Heart left ventricle (tissue), 16 donors: ENCODE measurements at regions of chr19 and their contacts with region 1.

Region 1: GRCh38 chr19:55385740-55386529 is at the start of gene RPL28:
- DNase-seq: peak; percentile 98 to 99 (median 98)
- ATAC-seq: peak; percentile 90 to 95 (median 90)
- H3K4me3 ChIP-seq: peak within 1 kb of the TSS; percentile 48 to 87 (median 78)
- H3K27ac ChIP-seq: peak within 1 kb of the TSS; percentile 79 to 97 (median 94)
- H3K4me1 ChIP-seq: peaks cover 14 to 58% (median 42%) of the 10 kb centered on the region in 12 donors
- H3K27me3 ChIP-seq: no peaks in the 10 kb centered on the region
- CTCF ChIP-seq: no peak
- POLR2A ChIP-seq: peak; percentile 34 to 99
- total RNA-seq, gene RPL28: 196 to 1,019 (median 565) TPM

Region 2: GRCh38 chr19:55216461-55217198 is 169.3 kb before region 1 on chr19:
- intact Hi-C with region 1: no loop called
- DNase-seq: peak; percentile 75 to 89 (median 85)
- ATAC-seq: peak; percentile 89 to 95 (median 92)
- H3K4me3 ChIP-seq: peak overlapping the region in 11 of 12 donors; percentile 7 to 60 (median 56)
- H3K27ac ChIP-seq: peak overlapping the region in 10 of 12 donors; percentile 30 to 89 (median 68)
- H3K4me1 ChIP-seq: peaks cover 0 to 16% (median 10%) of the 10 kb centered on the region in 12 donors
- H3K27me3 ChIP-seq: no peaks in the 10 kb centered on the region
- CTCF ChIP-seq: no peak
- POLR2A ChIP-seq: no peak

Region 3: DNA sequence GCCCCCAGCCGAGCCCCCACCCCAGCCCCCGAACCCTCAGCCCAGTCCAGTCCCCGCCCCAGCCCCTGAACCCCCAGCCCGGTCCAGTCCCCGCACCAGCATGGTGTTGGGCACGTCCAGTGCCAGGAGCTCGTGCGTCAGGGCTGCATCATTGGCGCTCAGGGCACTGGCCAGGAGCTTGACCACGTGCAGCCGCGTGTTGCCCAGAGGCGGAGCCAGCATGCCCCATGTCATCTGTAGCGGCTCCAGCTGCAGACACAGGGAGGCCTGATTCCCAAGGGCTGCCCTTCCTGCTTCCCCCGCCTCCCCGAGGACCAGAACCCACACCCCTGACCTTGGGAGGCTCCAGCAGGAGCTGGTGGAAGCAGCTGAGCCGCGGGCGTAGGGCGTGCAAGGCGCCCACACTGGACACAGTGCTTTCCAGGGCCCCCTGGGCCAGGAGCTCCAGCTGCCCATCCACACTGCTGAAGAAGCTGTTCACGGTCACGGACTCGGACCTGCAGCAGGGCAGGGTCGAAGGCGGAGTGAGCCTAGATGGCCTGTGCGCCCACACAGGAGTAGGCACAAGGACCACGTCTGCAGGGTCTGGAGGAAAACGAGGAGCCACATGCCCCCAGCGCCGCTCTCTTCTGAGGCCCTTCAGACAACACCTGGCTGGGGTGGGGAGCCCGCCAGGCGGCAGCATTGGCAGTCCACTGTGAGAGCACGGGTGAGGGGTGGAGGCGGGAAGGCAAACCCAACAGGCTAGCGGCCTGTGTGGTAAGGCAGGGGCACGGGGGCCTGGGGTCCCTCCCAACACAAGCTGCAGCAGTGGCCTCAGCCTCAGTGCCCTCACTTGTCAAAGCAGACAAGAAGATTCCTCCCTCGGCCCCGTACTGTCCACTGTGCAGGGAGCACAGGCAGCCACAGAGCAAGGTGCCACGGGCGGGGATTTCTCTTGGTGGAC is 144.5 kb before region 1 on chr19:
- intact Hi-C with region 1: no loop called
- DNase-seq: peak in 1 of 5 donors; percentile 21
- ATAC-seq: peak in 1 of 4 donors; percentile 6
- H3K4me3 ChIP-seq: no peak overlapping the region
- H3K27ac ChIP-seq: no peak overlapping the region
- H3K4me1 ChIP-seq: no peaks in the 10 kb centered on the region
- H3K27me3 ChIP-seq: no peaks in the 10 kb centered on the region
- CTCF ChIP-seq: no peak
- POLR2A ChIP-seq: no peak

Region 4: DNA sequence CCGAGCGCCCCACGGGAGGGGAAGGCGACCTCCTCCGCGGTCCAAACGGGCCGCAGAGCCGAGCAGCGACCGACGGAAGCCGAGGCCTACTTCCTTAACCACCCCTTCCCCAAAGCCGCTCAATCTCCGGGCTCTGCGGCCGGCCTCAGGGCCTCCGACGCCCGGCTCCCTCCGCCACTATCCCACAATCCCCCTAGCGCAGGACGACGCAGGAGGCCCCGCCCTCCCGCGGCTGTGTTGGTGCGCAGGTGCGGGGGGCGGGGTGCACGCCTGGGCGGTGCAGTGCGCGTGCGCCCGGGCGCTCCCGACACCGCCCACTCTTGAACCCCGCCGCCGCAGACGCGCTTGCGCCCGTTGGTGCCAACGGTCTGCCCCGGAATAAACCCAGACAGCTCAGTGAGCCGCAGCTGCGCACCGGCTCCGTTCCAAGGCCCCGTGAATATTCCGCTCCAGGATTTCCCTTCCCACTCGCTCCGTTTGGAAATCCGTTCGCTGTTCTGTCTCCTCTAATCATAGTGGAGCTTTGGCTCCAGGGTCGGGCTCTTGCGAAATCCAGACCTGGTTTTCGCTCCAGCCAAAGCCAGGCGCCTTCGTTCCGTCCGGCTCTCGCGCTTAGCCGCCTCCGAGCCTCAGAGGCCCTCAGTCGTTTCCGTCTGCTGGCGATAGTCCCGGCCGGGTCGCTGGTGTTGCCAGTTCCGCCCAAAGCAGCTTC is 127.0 kb before region 1 on chr19 and contains the start of gene PPP6R1:
- intact Hi-C with region 1: loop called in 1 of 10 experiments (anchors 1 kb)
- DNase-seq: peak; percentile 97 to 98 (median 98)
- ATAC-seq: peak; percentile 94 to 97 (median 96)
- H3K4me3 ChIP-seq: peak within 1 kb of the TSS; percentile 76 to 99 (median 94)
- H3K27ac ChIP-seq: peak within 1 kb of the TSS; percentile 85 to 98 (median 94)
- H3K4me1 ChIP-seq: peaks cover 4 to 50% (median 43%) of the 10 kb centered on the region in 12 donors
- H3K27me3 ChIP-seq: no peaks in the 10 kb centered on the region
- CTCF ChIP-seq: no peak
- POLR2A ChIP-seq: peak in 1 of 2 donors; percentile 91
- total RNA-seq, gene PPP6R1: 28.6 to 59.9 (median 41.1) TPM

Region 5: GRCh38 chr19:55279770-55280643 is 105.9 kb before region 1 on chr19 and contains the start of gene HSPBP1:
- intact Hi-C with region 1: loop called in 1 of 10 experiments (anchors 5 kb)
- DNase-seq: peak; percentile 88 to 94 (median 92)
- ATAC-seq: peak; percentile 87 to 94 (median 93)
- H3K4me3 ChIP-seq: peak within 1 kb of the TSS; percentile 58 to 91 (median 75)
- H3K27ac ChIP-seq: peak within 1 kb of the TSS; percentile 41 to 92 (median 84)
- H3K4me1 ChIP-seq: peaks cover 0 to 31% (median 11%) of the 10 kb centered on the region in 12 donors
- H3K27me3 ChIP-seq: no peaks in the 10 kb centered on the region
- CTCF ChIP-seq: no peak
- POLR2A ChIP-seq: peak in 1 of 2 donors; percentile 31
- total RNA-seq, gene HSPBP1: 25.7 to 42.0 (median 30.6) TPM

Region 6: DNA sequence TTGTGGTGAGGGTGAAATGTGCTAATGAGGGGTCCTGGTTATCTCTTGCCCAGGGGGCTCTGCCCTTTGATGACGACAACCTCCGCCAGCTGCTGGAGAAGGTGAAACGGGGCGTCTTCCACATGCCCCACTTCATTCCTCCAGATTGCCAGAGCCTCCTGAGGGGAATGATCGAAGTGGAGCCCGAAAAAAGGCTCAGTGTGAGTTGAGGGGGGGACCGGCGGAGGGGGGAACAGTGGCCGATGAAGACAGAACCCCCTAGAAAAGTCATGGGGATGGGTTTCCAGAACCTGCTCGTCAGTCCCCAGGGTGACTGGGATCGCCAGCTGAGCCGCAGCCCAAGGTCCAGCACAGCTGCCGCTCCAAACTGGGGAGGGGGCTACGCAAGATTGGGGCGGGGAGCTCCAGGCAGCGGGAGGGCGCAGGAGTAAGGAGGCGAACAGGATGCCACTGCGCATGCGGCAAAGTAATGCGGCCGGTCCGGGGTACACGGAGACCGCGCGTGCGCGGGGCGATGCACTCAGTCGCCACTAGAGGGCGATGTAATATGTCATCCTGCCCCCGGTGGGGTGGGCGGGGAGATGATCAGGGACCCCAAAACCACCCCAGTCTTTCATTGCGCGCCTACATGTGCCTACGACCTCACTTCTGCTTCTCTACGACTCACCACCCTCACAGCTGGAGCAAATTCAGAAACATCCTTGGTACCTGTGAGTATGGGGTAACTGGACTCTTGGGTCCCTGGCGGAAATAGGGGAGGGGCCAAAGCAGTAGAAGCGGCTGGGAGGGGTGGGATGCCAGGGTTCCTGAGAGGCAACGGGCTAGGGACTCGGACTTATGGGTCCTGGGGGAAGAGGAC is 84.2 kb before region 1 on chr19:
- intact Hi-C with region 1: loop called in 8 of 10 experiments (anchors 2 to 10 kb)
- DNase-seq: peak; percentile 84 to 96 (median 90)
- ATAC-seq: peak; percentile 80 to 93 (median 90)
- H3K4me3 ChIP-seq: peak overlapping the region in 10 of 12 donors; percentile 30 to 58 (median 46)
- H3K27ac ChIP-seq: peak overlapping the region in 1 of 12 donors; percentile 34
- H3K4me1 ChIP-seq: peaks cover 0 to 10% (median 4%) of the 10 kb centered on the region in 12 donors
- H3K27me3 ChIP-seq: no peaks in the 10 kb centered on the region
- CTCF ChIP-seq: peak; percentile 94 to 99 (median 97)
- POLR2A ChIP-seq: no peak

Region 7: DNA sequence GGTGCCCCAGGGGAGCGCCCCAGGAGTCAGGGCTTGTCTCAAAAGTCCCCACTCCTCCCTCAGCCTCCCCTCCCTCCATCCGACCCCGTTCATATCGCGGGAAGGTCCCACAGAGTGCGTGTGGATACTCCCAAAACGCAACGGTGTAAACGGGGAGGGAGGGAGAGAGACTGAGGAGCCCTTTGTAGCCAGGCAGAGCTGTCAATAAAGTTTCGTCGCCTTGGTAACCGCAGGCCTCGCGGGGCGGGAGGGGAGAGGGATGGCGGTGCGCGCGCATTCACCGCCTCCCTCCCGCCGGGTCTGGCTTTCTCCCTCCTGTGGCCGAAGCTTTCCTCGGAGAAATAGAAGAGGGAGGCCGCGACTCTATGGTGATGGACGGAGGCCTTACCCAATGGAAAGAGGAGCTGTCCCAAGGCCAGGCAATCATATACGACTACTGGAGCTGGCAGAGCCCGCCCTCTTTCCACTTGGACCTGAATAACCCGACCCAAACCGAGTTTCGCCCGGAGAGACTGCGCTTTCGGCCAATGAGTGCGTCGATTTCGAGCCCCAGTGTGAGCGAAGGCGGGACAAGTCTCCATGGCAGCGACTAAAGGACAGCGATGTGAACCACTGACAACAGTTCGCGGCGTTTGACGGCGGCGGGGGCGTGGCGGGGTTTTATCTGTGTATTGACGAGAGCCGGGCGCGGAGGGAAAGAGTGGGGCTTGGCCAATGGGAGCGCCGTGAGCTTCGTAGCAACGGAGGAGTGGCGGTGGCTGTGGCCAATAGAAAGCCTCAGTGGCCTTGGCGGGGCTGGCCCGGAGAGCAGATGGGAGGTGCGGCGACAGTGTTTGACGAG is 46.7 kb before region 1 on chr19 and contains the start of gene KMT5C:
- intact Hi-C with region 1: loop called in 3 of 10 experiments (anchors 1 to 2 kb)
- DNase-seq: peak; percentile 100
- ATAC-seq: peak; percentile 93 to 97 (median 96)
- H3K4me3 ChIP-seq: peak within 1 kb of the TSS; percentile 33 to 94 (median 72)
- H3K27ac ChIP-seq: peak within 1 kb of the TSS; percentile 75 to 94 (median 90)
- H3K4me1 ChIP-seq: peaks cover 0 to 29% (median 16%) of the 10 kb centered on the region in 12 donors
- H3K27me3 ChIP-seq: peaks cover 0 to 7% (median 0%) of the 10 kb centered on the region in 9 donors
- CTCF ChIP-seq: peak in 11 of 12 donors; percentile 12 to 66 (median 35)
- POLR2A ChIP-seq: peak in 1 of 2 donors; percentile 66
- total RNA-seq, gene KMT5C: 3.6 to 10.8 (median 7.2) TPM

Region 8: DNA sequence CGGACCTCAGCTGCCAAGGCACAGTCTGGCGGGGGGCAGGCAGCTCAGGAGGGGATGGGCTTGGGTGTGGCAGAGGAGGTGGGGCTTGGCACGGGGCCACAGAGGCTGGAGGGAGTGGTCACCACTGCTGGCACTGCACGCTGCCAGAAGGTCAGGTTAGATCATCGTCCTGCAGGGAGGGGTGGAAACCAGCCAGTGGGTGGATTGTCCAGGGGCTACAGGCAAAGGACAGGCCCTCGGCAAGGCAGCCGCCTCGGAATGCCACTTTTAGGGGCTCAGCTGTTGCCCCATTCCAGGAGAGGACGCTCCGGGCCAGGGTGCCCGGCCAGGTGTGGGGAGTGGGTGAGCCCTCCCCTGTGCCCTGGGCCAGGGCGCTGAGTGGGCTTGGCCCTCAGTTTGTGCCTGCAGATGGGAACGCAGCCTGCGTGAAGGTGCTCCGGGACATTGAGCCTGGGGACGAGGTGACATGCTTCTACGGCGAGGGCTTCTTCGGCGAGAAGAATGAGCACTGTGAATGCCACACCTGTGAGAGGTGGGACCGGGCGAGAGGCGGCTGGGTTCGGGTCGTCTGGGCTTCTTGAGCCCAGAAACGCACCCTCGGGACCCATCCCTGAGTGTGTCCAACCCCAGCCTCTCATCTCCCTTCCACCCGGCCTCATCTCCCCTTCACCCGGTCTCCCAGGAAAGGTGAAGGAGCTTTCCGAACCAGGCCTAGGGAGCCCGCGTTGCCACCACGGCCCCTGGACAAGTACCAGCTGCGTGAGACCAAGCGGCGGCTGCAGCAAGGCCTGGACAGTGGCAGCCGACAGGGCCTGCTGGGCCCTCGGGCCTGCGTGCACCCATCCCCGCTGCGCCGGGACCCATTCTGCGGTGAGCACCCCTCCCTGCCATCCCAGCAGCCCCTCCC is 39.9 kb before region 1 on chr19:
- intact Hi-C with region 1: loop called in 1 of 10 experiments (anchors 2 kb)
- DNase-seq: peak; percentile 32 to 75 (median 52)
- ATAC-seq: peak in 3 of 4 donors; percentile 26 to 38 (median 27)
- H3K4me3 ChIP-seq: no peak overlapping the region
- H3K27ac ChIP-seq: no peak overlapping the region
- H3K4me1 ChIP-seq: peaks cover 0 to 15% (median 5%) of the 10 kb centered on the region in 12 donors
- H3K27me3 ChIP-seq: peaks cover 0 to 15% (median 0%) of the 10 kb centered on the region in 9 donors
- CTCF ChIP-seq: no peak
- POLR2A ChIP-seq: no peak

Region 9: GRCh38 chr19:55407800-55408532 is 22.0 kb after region 1 on chr19:
- intact Hi-C with region 1: loop called in 3 of 10 experiments (anchors 1 to 2 kb)
- DNase-seq: peak; percentile 99 to 100 (median 99)
- ATAC-seq: peak; percentile 97 to 98 (median 97)
- H3K4me3 ChIP-seq: peak overlapping the region; percentile 74 to 99 (median 90)
- H3K27ac ChIP-seq: peak overlapping the region; percentile 84 to 99 (median 97)
- H3K4me1 ChIP-seq: peaks cover 3 to 24% (median 12%) of the 10 kb centered on the region in 12 donors
- H3K27me3 ChIP-seq: no peaks in the 10 kb centered on the region
- CTCF ChIP-seq: no peak
- POLR2A ChIP-seq: peak in 1 of 2 donors; percentile 70

Region 10: DNA sequence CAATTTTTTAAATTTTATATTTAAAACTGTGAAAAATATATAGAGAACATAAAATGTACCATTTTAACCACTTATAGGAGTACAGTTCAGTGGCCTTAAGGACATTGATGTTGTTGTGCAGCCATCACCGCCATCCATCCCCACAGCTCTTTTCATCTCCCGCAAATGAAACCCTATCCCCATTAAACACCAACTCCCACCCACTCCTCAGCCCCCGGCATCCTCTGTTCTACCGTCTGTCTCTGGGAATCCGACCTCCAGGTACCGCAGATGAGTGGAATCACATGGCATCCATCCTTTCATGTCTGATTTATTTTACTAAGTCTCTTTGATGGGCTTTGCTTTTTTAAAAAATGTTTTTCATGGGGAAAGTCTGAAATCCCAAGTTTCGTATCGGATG is 1233.2 kb after region 1 on chr19:
- intact Hi-C with region 1: no loop called
- DNase-seq: no peak
- ATAC-seq: no peak
- H3K4me3 ChIP-seq: no peak overlapping the region
- H3K27ac ChIP-seq: no peak overlapping the region
- H3K4me1 ChIP-seq: no peaks in the 10 kb centered on the region
- H3K27me3 ChIP-seq: no peaks in the 10 kb centered on the region
- CTCF ChIP-seq: no peak
- POLR2A ChIP-seq: no peak